ENCODE measurements at regions of chr13 and their contacts with region 1.

Region 1: GRCh38 chr13:39779337-39780265 is 124.1 kb downstream of the COG6 start:
- DNase-seq: no peak
- H3K4me3 ChIP-seq: no peak overlapping the region
- H3K27ac ChIP-seq: no peak overlapping the region
- H3K4me1 ChIP-seq: peaks cover 5% of the 10 kb centered on the region
- H3K27me3 ChIP-seq: no peaks in the 10 kb centered on the region
- CTCF ChIP-seq: no peak
- EP300 ChIP-seq: no peak
- POLR2A ChIP-seq: no peak

Region 2: GRCh38 chr13:39463611-39464010 is 316.0 kb before region 1 on chr13:
- intact Hi-C with region 1: no loop called
- DNase-seq: no peak
- H3K4me3 ChIP-seq: no peak overlapping the region
- H3K27ac ChIP-seq: no peak overlapping the region
- H3K4me1 ChIP-seq: peaks cover 12% of the 10 kb centered on the region
- H3K27me3 ChIP-seq: no peaks in the 10 kb centered on the region
- CTCF ChIP-seq: no peak
- EP300 ChIP-seq: no peak
- POLR2A ChIP-seq: no peak

Region 3: DNA sequence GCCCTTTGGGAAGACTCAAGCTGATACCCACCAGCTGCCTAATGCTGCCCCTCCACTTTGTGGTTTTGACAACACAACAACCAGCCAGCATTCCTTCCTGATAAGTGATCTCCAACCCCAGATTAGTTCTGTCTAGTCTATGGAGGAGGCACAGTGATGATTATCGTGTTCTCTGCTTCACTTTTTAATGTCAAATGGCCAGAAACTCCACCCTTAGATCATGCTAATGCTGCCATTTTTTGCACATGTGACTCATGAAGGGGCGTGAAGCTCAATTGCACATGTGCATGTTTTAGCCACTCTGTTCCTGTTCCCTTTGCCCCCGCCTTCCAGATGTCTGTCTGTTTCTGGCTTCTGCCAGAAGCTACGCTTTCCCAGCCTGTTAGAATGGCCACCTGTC is 75.6 kb after region 1 on chr13:
- intact Hi-C with region 1: no loop called
- DNase-seq: no peak
- H3K4me3 ChIP-seq: no peak overlapping the region
- H3K27ac ChIP-seq: no peak overlapping the region
- H3K4me1 ChIP-seq: no peaks in the 10 kb centered on the region
- H3K27me3 ChIP-seq: no peaks in the 10 kb centered on the region
- CTCF ChIP-seq: no peak
- EP300 ChIP-seq: no peak
- POLR2A ChIP-seq: no peak

Region 4: GRCh38 chr13:39870197-39870747 is 90.7 kb after region 1 on chr13:
- intact Hi-C with region 1: no loop called
- DNase-seq: no peak
- H3K4me3 ChIP-seq: no peak overlapping the region
- H3K27ac ChIP-seq: no peak overlapping the region
- H3K4me1 ChIP-seq: peaks cover 5% of the 10 kb centered on the region
- H3K27me3 ChIP-seq: no peaks in the 10 kb centered on the region
- CTCF ChIP-seq: no peak
- EP300 ChIP-seq: no peak
- POLR2A ChIP-seq: no peak

Region 5: GRCh38 chr13:40682449-40683240 is 903.0 kb after region 1 on chr13:
- intact Hi-C with region 1: loop called in 1 of 4 experiments (anchors 10 kb)
- DNase-seq: no peak
- H3K4me3 ChIP-seq: no peak overlapping the region
- H3K27ac ChIP-seq: no peak overlapping the region
- H3K4me1 ChIP-seq: peaks cover 3% of the 10 kb centered on the region
- H3K27me3 ChIP-seq: no peaks in the 10 kb centered on the region
- CTCF ChIP-seq: peak; percentile 27 to 50 (median 46)
- EP300 ChIP-seq: no peak
- POLR2A ChIP-seq: no peak

Measured in ovary (tissue), 10 donors.